Prostate gland (tissue), 2 donors: ENCODE measurements at regions of chrX and their contacts with region 1.

Region 1: DNA sequence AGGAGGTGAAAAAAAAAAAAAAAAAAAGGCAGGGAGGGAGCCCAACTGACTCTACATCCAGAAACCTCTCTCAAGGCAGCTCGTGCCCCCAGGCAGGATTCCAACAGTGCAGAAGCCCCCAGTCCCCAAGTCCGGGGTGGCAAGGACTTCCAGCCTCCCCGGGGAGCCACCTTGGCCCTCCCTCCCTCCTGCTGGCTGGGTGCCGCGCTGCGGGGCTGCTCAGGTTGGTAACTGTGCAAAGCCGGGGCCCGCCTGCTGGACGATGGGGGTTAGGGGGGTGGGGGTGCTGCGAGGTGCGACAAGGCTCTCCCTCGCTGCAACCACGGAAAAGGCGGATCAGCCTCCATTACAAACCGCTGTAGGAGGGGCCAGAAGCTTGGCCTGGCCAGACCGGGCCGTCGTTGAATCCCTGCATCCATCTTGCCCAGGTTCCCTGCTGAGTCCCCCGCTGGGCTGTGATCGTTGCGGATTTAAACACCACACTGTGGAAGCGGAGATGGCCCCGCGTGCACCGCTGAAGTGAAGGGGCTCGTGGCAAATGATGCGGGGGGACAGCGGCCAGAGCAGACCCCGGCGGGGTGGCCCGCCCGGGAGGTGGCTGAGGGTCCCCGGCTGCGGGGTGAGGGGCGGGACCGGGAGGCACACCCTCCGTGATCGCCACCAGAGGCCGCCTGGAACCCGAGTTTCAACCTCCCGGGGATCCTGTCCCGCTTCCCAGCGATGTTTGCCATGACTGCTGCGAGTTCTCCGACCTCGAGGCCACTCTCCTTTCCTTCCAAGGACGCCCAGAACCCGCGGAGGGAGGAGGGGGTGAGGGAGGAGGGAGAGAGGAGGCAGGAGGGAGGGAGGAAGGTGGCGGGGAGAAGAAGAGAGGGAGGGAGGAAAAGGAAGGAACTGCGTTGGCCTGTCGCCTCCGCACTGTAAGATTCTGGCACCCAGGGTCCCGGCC is 58.0 kb upstream of the DDX3X start:
- DNase-seq: peak; percentile 17
- H3K4me3 ChIP-seq: peak overlapping the region; percentile 36 to 37
- H3K27ac ChIP-seq: peak overlapping the region; percentile 55 to 66
- H3K4me1 ChIP-seq: no peaks in the 10 kb centered on the region
- H3K27me3 ChIP-seq: no peaks in the 10 kb centered on the region
- CTCF ChIP-seq: peak in 3 of 4 experiments; percentile 16 to 43 (median 32)
- POLR2A ChIP-seq: no peak

Region 2: GRCh38 chrX:41734530-41734929 is 458.6 kb after region 1 on chrX:
- intact Hi-C with region 1: loop called (anchors 10 kb)
- DNase-seq: no peak
- H3K4me3 ChIP-seq: no peak overlapping the region
- H3K27ac ChIP-seq: no peak overlapping the region
- H3K4me1 ChIP-seq: no peaks in the 10 kb centered on the region
- H3K27me3 ChIP-seq: no peaks in the 10 kb centered on the region
- CTCF ChIP-seq: peak in 2 of 4 experiments; percentile 19 to 23
- POLR2A ChIP-seq: no peak